ENCODE measurements at regions of chr18 and their contacts with region 1.

Region 1: GRCh38 chr18:30265190-30265589 is 777.4 kb downstream of the DSC3 start:
- DNase-seq: no peak
- H3K4me3 ChIP-seq: no peak overlapping the region
- H3K27ac ChIP-seq: no peak overlapping the region
- H3K4me1 ChIP-seq: no peaks in the 10 kb centered on the region
- H3K27me3 ChIP-seq: peaks cover 5% of the 10 kb centered on the region
- CTCF ChIP-seq: no peak
- EP300 ChIP-seq: no peak
- POLR2A ChIP-seq: no peak

Region 2: GRCh38 chr18:30192216-30192615 is 73.0 kb before region 1 on chr18:
- intact Hi-C with region 1: loop called in 1 of 4 experiments (anchors 10 kb)
- DNase-seq: no peak
- H3K4me3 ChIP-seq: no peak overlapping the region
- H3K27ac ChIP-seq: no peak overlapping the region
- H3K4me1 ChIP-seq: no peaks in the 10 kb centered on the region
- H3K27me3 ChIP-seq: no peaks in the 10 kb centered on the region
- CTCF ChIP-seq: no peak
- EP300 ChIP-seq: no peak
- POLR2A ChIP-seq: no peak

Region 3: GRCh38 chr18:30234755-30235154 is 30.4 kb before region 1 on chr18:
- intact Hi-C with region 1: no loop called
- DNase-seq: no peak
- H3K4me3 ChIP-seq: no peak overlapping the region
- H3K27ac ChIP-seq: no peak overlapping the region
- H3K4me1 ChIP-seq: no peaks in the 10 kb centered on the region
- H3K27me3 ChIP-seq: peaks cover 3% of the 10 kb centered on the region
- CTCF ChIP-seq: no peak
- EP300 ChIP-seq: no peak
- POLR2A ChIP-seq: no peak

Measured in ovary (tissue), 10 donors.